GM12878 (cell line): ENCODE measurements at regions of chr3 and their contacts with region 1.

Region 1: GRCh38 chr3:122642935-122643334 is 37.7 kb upstream of the PARP14 start:
- DNase-seq: peak; percentile 65
- ATAC-seq: peak; percentile 78
- H3K4me3 ChIP-seq: no peak overlapping the region
- H3K27ac ChIP-seq: no peak overlapping the region
- H3K4me1 ChIP-seq: peaks cover 22% of the 10 kb centered on the region
- H3K27me3 ChIP-seq: no peaks in the 10 kb centered on the region
- CTCF ChIP-seq: no peak
- EP300 ChIP-seq: peak; percentile 38 to 43; a peak in 2 of 4 replicates
- POLR2A ChIP-seq: no peak
- RAD21 ChIP-seq: no peak

Region 2: GRCh38 chr3:122628569-122628968 is 14.4 kb before region 1 on chr3:
- CTCF ChIA-PET with region 1: interaction called, 38 read pairs
- POLR2A ChIA-PET with region 1: interaction called, 14 read pairs
- RAD21 ChIA-PET with region 1: interaction called, 11 read pairs
- SMC1A ChIA-PET with region 1: interaction called, 63 read pairs
- in situ Hi-C with region 1: no loop called
- intact Hi-C with region 1: no loop called
- DNase-seq: no peak
- ATAC-seq: no peak
- H3K4me3 ChIP-seq: no peak overlapping the region
- H3K27ac ChIP-seq: no peak overlapping the region
- H3K4me1 ChIP-seq: peaks cover 14% of the 10 kb centered on the region
- H3K27me3 ChIP-seq: no peaks in the 10 kb centered on the region
- CTCF ChIP-seq: no peak
- EP300 ChIP-seq: no peak
- POLR2A ChIP-seq: no peak
- RAD21 ChIP-seq: no peak

Region 3: DNA sequence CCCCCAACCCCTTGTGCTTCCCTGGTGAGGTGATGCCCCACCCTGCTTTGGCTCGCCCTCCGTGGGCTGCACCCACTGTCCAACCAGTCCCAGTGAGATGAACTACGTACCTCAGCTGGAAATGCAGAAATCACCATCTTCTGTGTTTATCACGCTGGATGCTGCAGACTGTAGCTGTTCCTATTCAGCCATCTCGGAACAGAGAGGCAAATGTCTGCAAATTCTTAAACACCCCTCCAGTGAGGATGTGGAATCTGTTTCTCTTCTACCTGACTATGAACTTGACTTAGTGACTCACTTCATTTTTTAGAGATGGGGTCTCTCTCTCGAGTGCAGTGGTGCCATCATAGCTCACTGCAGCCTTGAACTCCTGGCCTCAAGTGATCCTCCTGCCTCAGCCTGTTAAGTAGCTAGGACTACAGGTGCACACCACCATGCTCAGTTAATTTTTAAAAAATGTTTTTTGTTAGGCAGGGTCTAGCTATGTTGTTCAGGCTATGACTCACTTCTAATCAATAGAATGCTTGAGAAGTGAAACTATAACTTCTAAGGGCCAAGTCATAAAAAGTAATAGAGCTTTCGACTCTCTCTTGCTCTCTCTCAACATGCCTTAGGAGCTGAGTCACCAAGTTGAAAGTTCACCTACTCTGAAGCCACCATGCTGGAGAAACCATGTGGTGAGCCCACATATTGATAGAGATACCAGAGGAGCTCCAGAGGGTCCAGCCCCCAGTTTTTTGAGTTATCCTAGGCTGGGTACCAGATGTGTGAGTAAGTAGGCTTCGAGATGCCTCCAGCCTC is 26.2 kb after region 1 on chr3:
- CTCF ChIA-PET with region 1: interaction called, 14 read pairs
- POLR2A ChIA-PET with region 1: interaction called, 10 read pairs
- RAD21 ChIA-PET with region 1: interaction called, 4 read pairs
- SMC1A ChIA-PET with region 1: interaction called, 5 read pairs
- in situ Hi-C with region 1: no loop called
- intact Hi-C with region 1: no loop called
- DNase-seq: no peak
- ATAC-seq: peak; percentile 97
- H3K4me3 ChIP-seq: no peak overlapping the region
- H3K27ac ChIP-seq: peak overlapping the region; percentile 41; the same call in 1 of the 2 replicates
- H3K4me1 ChIP-seq: peaks cover 12% of the 10 kb centered on the region
- H3K27me3 ChIP-seq: no peaks in the 10 kb centered on the region
- CTCF ChIP-seq: no peak
- EP300 ChIP-seq: no peak
- POLR2A ChIP-seq: no peak
- RAD21 ChIP-seq: no peak